ENCODE measurements at regions of chr11 and their contacts with region 1.

Region 1: DNA sequence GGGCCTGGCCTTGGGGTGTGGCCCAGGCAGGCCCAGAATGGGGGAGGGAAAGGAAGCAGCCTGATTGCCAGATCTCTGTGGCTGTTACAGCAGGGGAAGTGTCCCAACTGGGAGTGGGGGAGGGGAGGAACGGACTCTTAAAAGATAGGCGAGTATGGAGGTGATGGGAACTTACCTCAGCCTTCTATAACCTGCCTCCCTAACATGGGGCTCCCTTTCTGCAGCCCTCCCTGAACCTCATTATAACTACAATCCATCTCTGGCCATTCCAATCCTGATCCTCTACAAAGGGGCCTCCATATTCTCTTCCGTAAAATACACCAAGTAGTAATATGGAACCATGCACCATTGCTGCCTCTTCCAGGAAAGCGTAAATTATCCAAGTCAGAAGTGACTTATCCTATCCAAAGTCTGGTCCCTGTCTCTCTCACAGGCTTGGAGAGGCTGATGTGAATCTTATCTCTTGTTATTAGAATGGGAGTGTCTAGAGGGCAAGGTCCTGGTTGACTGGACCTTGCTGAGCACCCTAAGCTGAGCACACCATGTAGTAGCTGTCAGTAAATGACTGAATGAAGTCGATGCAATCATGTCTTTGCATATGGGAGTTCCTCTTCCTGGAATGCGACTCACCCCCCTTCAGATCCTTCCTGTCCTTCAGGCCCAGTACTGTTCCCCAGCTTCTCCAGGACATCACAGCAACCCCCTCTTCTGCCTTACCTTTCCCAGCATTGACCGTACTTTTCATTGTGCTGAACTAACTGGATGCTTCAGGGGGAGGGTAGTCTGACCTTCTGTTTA is 5.9 kb downstream of the RHOG start:
- DNase-seq: peak; percentile 15
- H3K4me3 ChIP-seq: no peak overlapping the region
- H3K27ac ChIP-seq: no peak overlapping the region
- H3K4me1 ChIP-seq: peaks cover 33% of the 10 kb centered on the region
- H3K27me3 ChIP-seq: no peaks in the 10 kb centered on the region
- CTCF ChIP-seq: no peak
- POLR2A ChIP-seq: no peak

Region 2: GRCh38 chr11:3684819-3685172 is 150.1 kb before region 1 on chr11:
- CTCF ChIA-PET with region 1: no interaction called
- POLR2A ChIA-PET with region 1: interaction called, 10 read pairs
- dilution Hi-C with region 1: no loop called
- intact Hi-C with region 1: no loop called
- DNase-seq: no peak
- H3K4me3 ChIP-seq: no peak overlapping the region
- H3K27ac ChIP-seq: no peak overlapping the region
- H3K4me1 ChIP-seq: no peaks in the 10 kb centered on the region
- H3K27me3 ChIP-seq: no peaks in the 10 kb centered on the region
- CTCF ChIP-seq: no peak
- POLR2A ChIP-seq: no peak

Measured in endothelial cell of umbilical vein (primary cell).